ENCODE measurements at regions of chr6 and their contacts with region 1.

Region 1: DNA sequence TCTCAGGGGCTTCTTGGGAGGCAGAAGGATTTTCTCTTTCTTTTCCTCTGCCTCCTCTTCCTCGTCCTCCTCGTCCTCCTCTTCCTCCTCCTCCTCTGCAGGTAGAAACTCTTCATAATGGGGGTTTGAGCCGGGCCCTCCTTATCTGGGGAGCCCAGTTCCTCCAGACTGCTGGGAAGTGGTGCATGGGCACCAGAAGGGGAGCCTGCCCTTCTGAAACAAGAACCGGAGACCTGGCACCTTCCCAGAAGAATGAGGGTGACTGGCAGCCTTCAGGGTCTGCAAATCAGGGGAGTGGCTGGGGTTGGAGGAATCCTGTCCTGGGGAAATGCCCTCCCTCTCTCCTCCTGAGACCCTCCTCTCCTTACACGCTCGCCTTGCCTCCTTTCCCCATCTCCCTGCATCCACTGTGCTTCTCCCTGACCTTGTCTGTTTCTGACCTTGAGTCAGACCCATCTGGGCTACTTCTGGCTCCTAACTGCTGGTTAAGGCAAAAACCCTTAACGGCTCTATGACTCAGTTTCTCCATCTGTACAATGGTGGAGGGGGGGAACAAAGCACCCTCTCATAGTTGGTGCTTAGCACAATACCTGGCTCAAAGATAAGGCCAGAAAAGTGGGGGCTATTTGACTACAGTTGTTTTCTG is 1.7 kb downstream of the TULP1 start:
- DNase-seq: no peak
- ATAC-seq: no peak
- H3K4me3 ChIP-seq: no peak overlapping the region
- H3K27ac ChIP-seq: no peak overlapping the region
- H3K4me1 ChIP-seq: peaks cover 6% of the 10 kb centered on the region; the same call in 1 of the 2 replicates
- H3K27me3 ChIP-seq: peaks cover 2 to 6% of the 10 kb centered on the region in 2 experiments; a peak in 1 of 4 replicates
- CTCF ChIP-seq: no peak
- EP300 ChIP-seq: no peak
- POLR2A ChIP-seq: no peak
- RAD21 ChIP-seq: no peak

Region 2: DNA sequence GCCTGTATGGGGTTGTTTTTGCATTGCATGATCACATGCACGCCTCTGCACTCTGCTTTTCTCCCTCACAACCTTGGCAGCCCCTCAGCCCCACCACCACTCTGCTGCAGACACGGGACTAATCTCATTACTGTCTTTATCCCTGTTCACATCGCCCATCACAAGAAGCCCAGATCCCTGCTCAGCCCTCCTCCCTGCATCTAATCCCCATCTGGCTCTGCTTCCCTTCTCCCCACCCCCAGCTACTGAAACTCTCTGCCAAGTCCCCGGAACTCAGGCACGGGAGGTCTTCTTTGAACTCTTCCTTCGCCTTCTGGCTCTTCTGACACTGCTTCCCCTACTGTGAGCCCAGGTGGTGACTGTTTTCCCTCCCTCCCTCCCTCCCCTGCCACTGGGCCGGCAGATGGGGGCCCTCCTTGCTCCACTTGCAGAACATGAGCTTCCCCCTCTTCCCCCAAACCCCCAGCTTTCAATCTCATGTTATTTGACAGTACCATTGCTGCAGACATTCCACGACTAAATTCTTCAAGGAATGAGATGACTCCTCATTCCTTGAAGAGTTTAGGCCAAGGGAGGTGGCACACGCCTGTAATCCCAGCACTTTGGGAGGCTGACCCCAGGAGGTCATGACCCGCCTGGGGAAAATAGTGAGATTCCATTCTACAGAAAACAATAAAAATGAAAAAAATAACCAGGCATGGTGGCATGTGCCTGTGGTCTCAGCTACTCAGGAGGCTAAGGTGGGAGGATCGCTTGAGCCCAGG is 23.6 kb after region 1 on chr6:
- CTCF ChIA-PET with region 1: no interaction called
- POLR2A ChIA-PET with region 1: no interaction called
- RAD21 ChIA-PET with region 1: no interaction called
- SMC1A ChIA-PET with region 1: no interaction called
- in situ Hi-C with region 1: no loop called
- intact Hi-C with region 1: loop called (anchors 1 kb)
- DNase-seq: no peak
- ATAC-seq: no peak
- H3K4me3 ChIP-seq: no peak overlapping the region
- H3K27ac ChIP-seq: no peak overlapping the region
- H3K4me1 ChIP-seq: no peaks in the 10 kb centered on the region
- H3K27me3 ChIP-seq: no peaks in the 10 kb centered on the region
- CTCF ChIP-seq: no peak
- EP300 ChIP-seq: no peak
- POLR2A ChIP-seq: no peak
- RAD21 ChIP-seq: no peak